ENCODE measurements at regions of chr3 and their contacts with region 1.

Region 1: DNA sequence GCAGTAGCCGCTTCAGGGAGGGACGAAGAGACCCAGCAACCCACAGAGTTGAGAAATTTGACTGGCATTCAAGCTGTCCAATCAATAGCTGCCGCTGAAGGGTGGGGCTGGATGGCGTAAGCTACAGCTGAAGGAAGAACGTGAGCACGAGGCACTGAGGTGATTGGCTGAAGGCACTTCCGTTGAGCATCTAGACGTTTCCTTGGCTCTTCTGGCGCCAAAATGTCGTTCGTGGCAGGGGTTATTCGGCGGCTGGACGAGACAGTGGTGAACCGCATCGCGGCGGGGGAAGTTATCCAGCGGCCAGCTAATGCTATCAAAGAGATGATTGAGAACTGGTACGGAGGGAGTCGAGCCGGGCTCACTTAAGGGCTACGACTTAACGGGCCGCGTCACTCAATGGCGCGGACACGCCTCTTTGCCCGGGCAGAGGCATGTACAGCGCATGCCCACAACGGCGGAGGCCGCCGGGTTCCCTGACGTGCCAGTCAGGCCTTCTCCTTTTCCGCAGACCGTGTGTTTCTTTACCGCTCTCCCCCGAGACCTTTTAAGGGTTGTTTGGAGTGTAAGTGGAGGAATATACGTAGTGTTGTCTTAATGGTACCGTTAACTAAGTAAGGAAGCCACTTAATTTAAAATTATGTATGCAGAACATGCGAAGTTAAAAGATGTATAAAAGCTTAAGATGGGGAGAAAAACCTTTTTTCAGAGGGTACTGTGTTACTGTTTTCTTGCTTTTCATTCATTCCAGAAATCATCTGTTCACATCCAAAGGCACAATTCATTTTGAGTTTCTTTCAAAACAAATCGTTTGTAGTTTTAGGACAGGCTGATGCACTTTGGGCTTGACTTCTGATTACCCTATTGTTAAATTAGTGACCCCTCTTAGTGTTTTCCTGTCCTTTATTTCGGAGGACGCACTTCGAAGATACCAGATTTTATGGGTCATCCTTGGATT is at the start of gene MLH1:
- DNase-seq: peak; percentile 94 to 100 (median 99)
- ATAC-seq: peak; percentile 89
- H3K4me3 ChIP-seq: peak within 1 kb of the TSS; percentile 60
- H3K27ac ChIP-seq: peak within 1 kb of the TSS; percentile 94
- H3K4me1 ChIP-seq: peaks cover 16 to 21% of the 10 kb centered on the region in 2 experiments
- H3K27me3 ChIP-seq: no peaks in the 10 kb centered on the region
- CTCF ChIP-seq: no peak
- EP300 ChIP-seq: peak; percentile 74
- POLR2A ChIP-seq: peak; percentile 91
- RAD21 ChIP-seq: no peak
- polyA plus RNA-seq, gene MLH1: 81.6 to 134 TPM

Region 2: DNA sequence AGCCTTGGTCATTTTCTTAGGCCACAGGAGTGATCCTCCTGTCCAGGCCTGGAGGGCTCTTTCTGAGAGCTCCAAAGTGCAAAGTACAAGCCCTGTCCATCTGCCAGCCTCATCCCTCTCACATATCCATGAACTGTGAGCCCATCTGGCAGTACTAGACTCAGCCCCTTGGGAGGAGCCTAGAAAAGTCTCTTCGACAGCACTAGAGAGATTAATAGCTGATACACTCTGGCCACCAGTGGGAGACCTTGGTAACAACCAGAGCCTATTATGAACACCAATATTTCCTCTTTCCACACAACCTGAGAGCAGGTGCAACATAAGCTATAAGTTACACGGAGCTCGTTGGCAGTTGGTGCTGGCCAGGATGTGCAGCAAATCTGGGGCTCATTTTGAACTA is 169.8 kb before region 1 on chr3:
- CTCF ChIA-PET with region 1: no interaction called
- POLR2A ChIA-PET with region 1: no interaction called
- in situ Hi-C with region 1: no loop called
- intact Hi-C with region 1: no loop called
- DNase-seq: no peak
- ATAC-seq: peak; percentile 54; the same call in 2 of the 3 replicates
- H3K4me3 ChIP-seq: no peak overlapping the region
- H3K27ac ChIP-seq: no peak overlapping the region
- H3K4me1 ChIP-seq: no peaks in the 10 kb centered on the region
- H3K27me3 ChIP-seq: peaks cover 7 to 52% of the 10 kb centered on the region in 2 experiments; a peak in 4 of 5 replicates
- CTCF ChIP-seq: no peak
- EP300 ChIP-seq: no peak
- POLR2A ChIP-seq: no peak
- RAD21 ChIP-seq: no peak

Region 3: DNA sequence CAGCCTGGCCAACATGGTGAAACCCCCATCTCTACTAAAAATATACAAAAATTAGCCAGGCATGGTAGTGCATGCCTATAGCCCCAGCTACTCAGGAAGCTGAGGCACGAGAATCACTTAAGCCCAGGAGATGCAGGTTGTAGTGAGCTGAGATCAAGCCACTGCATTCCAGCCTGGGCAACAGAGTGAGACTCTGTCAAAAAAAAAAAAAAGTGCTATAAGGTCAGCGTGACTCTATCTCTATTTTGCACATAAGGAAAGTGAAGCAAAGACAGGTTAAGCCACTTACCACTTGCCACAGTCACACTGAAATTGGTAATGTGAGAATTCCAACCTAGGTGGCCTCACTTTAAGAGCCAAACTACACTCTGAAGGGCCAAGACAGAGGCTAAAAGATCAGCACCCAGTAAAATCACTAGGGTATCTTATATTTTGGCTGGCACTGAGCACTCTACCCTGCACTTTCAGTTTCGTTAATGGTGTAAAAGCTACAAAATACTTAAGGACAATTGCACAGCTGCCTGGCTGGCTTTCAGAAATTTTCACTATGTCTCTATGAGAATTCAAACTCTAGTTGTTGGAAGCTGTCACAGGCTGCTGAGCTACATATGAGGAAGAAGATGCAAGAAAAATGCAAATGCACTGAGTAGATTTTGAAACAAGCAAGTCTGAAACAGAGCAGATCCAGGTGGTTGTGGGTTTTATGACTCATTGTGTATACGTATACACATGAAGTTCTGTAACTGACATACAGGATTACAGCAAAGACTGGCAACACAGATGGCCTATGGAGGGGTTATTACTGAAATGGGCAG is 81.4 kb before region 1 on chr3:
- CTCF ChIA-PET with region 1: no interaction called
- POLR2A ChIA-PET with region 1: interaction called, 10 read pairs
- in situ Hi-C with region 1: no loop called
- intact Hi-C with region 1: loop called (anchors 2 kb)
- DNase-seq: peak in 2 of 4 experiments; percentile 57 to 59
- ATAC-seq: peak; percentile 65
- H3K4me3 ChIP-seq: no peak overlapping the region
- H3K27ac ChIP-seq: peak overlapping the region; percentile 49
- H3K4me1 ChIP-seq: peaks cover 20 to 26% of the 10 kb centered on the region in 2 experiments
- H3K27me3 ChIP-seq: no peaks in the 10 kb centered on the region
- CTCF ChIP-seq: no peak
- EP300 ChIP-seq: peak; percentile 48; the same call in 1 of the 2 replicates
- POLR2A ChIP-seq: no peak
- RAD21 ChIP-seq: no peak

Region 4: DNA sequence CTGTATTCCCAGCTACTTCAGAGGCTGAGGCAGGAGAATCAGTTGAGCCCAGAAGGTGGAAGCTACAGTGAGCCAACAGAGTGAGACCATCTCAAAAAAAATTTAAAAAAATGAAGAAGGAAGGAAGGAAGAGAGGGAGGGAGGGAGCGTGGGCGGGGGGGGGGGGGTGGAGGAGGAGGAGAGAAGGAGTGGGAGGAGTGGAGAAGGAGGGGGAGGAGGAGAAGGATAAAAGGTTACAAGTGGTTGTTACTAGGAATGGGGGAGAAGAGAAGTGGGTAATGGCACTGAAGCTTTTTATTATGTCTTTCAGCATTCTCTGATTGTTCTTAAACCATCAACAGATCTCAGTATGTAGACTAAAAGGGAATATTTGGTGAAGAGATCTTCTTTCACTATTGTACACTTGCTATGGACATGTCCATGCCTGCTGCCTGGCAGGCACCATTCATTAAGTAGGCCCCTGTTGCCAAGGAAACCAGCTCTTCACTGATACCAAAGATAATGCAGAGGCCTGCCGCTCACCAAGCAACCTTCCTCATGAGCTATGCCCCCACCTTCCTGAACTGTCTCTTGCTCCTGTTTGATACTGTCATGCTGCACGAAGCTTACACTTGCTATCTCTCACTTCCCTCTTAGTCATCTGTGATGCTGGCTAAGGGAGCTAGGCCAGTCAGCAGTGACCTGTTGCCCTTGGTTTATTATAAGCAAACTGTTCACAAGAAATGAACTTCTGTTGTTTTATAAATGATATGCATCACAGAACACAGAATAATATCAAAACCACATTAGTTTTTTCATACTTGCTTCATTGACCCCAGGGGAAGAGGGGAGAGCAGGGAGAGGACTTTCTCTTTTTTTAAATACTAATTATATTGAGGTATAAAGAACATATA is 23.8 kb before region 1 on chr3:
- CTCF ChIA-PET with region 1: no interaction called
- POLR2A ChIA-PET with region 1: interaction called, 29 read pairs
- in situ Hi-C with region 1: no loop called
- intact Hi-C with region 1: loop called (anchors 1 kb)
- DNase-seq: peak; percentile 88 to 99 (median 92)
- ATAC-seq: peak; percentile 98
- H3K4me3 ChIP-seq: no peak overlapping the region
- H3K27ac ChIP-seq: peak overlapping the region; percentile 79
- H3K4me1 ChIP-seq: peaks cover 31 to 44% of the 10 kb centered on the region in 2 experiments
- H3K27me3 ChIP-seq: no peaks in the 10 kb centered on the region
- CTCF ChIP-seq: no peak
- EP300 ChIP-seq: peak; percentile 84
- POLR2A ChIP-seq: 0 out of 2 replicates have a peak, but pooled peaks have one; percentile 43
- RAD21 ChIP-seq: peak in 1 of 2 experiments; percentile 27; a peak in 1 of 4 replicates

Region 5: GRCh38 chr3:36981006-36981405 is 12.6 kb before region 1 on chr3:
- CTCF ChIA-PET with region 1: no interaction called
- POLR2A ChIA-PET with region 1: interaction called, 29 read pairs
- in situ Hi-C with region 1: no loop called
- intact Hi-C with region 1: no loop called
- DNase-seq: no peak
- ATAC-seq: peak; percentile 7; the same call in 2 of the 3 replicates
- H3K4me3 ChIP-seq: no peak overlapping the region
- H3K27ac ChIP-seq: no peak overlapping the region
- H3K4me1 ChIP-seq: no peaks in the 10 kb centered on the region; a peak in 1 of 5 replicates
- H3K27me3 ChIP-seq: no peaks in the 10 kb centered on the region
- CTCF ChIP-seq: no peak
- EP300 ChIP-seq: no peak
- POLR2A ChIP-seq: no peak
- RAD21 ChIP-seq: no peak

Region 6: GRCh38 chr3:37014620-37015019 is 21.0 kb after region 1 on chr3:
- CTCF ChIA-PET with region 1: no interaction called
- POLR2A ChIA-PET with region 1: interaction called, 11 read pairs
- in situ Hi-C with region 1: no loop called
- intact Hi-C with region 1: no loop called
- DNase-seq: no peak
- ATAC-seq: peak; percentile 58
- H3K4me3 ChIP-seq: no peak overlapping the region
- H3K27ac ChIP-seq: no peak overlapping the region
- H3K4me1 ChIP-seq: no peaks in the 10 kb centered on the region; a peak in 1 of 5 replicates
- H3K27me3 ChIP-seq: no peaks in the 10 kb centered on the region
- CTCF ChIP-seq: no peak
- EP300 ChIP-seq: no peak
- POLR2A ChIP-seq: no peak
- RAD21 ChIP-seq: no peak

Region 7: GRCh38 chr3:37024092-37024491 is 30.5 kb after region 1 on chr3:
- CTCF ChIA-PET with region 1: no interaction called
- POLR2A ChIA-PET with region 1: interaction called, 17 read pairs
- in situ Hi-C with region 1: no loop called
- intact Hi-C with region 1: no loop called
- DNase-seq: peak in 3 of 4 experiments; percentile 22 to 63 (median 54)
- ATAC-seq: peak; percentile 51; the same call in 2 of the 3 replicates
- H3K4me3 ChIP-seq: no peak overlapping the region
- H3K27ac ChIP-seq: no peak overlapping the region
- H3K4me1 ChIP-seq: peaks cover 4 to 8% of the 10 kb centered on the region in 2 experiments; a peak in 3 of 5 replicates
- H3K27me3 ChIP-seq: no peaks in the 10 kb centered on the region
- CTCF ChIP-seq: peak; percentile 34 to 52 (median 47); a peak in 5 of 6 replicates
- EP300 ChIP-seq: no peak
- POLR2A ChIP-seq: no peak
- RAD21 ChIP-seq: peak in 1 of 2 experiments; percentile 61; a peak in 2 of 4 replicates

Region 8: GRCh38 chr3:37210230-37210629 is 216.6 kb after region 1 on chr3:
- CTCF ChIA-PET with region 1: no interaction called
- POLR2A ChIA-PET with region 1: interaction called, 3 read pairs
- in situ Hi-C with region 1: no loop called
- intact Hi-C with region 1: loop called (anchors 1 kb)
- DNase-seq: no peak
- ATAC-seq: no peak
- H3K4me3 ChIP-seq: no peak overlapping the region
- H3K27ac ChIP-seq: no peak overlapping the region
- H3K4me1 ChIP-seq: no peaks in the 10 kb centered on the region; a peak in 1 of 5 replicates
- H3K27me3 ChIP-seq: peaks cover 3 to 11% of the 10 kb centered on the region in 2 experiments; a peak in 4 of 5 replicates
- CTCF ChIP-seq: no peak
- EP300 ChIP-seq: no peak
- POLR2A ChIP-seq: no peak
- RAD21 ChIP-seq: no peak

Region 9: GRCh38 chr3:37510755-37511154 is 517.1 kb after region 1 on chr3:
- CTCF ChIA-PET with region 1: no interaction called
- POLR2A ChIA-PET with region 1: no interaction called
- in situ Hi-C with region 1: no loop called
- intact Hi-C with region 1: no loop called
- DNase-seq: no peak
- ATAC-seq: no peak
- H3K4me3 ChIP-seq: no peak overlapping the region
- H3K27ac ChIP-seq: no peak overlapping the region
- H3K4me1 ChIP-seq: no peaks in the 10 kb centered on the region
- H3K27me3 ChIP-seq: peaks cover 8 to 25% of the 10 kb centered on the region in 2 experiments; a peak in 4 of 5 replicates
- CTCF ChIP-seq: no peak
- EP300 ChIP-seq: no peak
- POLR2A ChIP-seq: no peak
- RAD21 ChIP-seq: no peak

Measured in K562 (cell line).